ENCODE measurements at regions of chrX and their contacts with region 1.

Region 1: GRCh38 chrX:127276325-127276724 is 456.8 kb downstream of the PRR32 start:
- DNase-seq: no peak

Region 2: DNA sequence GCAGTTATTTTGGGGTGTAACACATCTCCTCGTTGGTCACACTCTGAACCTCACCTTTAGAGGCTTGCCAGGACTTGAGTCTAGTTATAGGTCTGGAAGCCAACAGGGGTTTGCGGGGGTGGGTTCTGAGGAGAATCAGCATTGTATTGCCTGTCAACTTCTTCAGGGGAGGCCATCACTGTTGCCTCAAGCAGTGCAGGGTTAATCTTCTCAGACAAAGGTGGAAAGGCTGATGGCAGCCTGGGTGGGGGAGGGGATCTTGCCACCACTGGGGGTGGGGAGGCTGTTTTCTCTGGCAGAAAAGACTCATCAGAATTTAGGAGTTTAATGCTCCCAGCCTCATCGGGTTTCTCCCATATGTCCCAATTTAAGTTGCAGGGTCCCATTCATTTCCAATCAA is 69.0 kb before region 1 on chrX:
- intact Hi-C with region 1: no loop called
- DNase-seq: no peak

Region 3: DNA sequence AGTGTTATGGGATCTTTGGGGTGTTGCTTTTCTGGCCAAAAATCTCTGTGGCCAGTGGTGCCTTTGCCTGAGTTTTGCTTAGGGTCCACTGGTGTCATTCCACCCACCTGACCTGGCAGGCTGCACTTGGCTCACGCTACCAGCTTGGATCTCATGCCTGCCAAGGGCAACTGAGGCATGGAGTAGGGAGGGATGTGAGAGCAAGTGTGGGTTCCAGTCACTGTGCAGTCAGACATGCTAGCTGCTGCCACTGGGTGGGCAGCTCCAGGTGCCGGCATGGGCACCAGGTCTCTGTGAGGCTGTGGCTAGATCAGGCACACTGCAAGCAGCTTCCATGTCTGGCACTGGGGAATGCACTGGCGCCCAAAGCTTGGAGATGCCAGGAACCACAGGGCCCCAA is 32.7 kb before region 1 on chrX:
- intact Hi-C with region 1: no loop called
- DNase-seq: no peak

Region 4: GRCh38 chrX:127256285-127256684 is 20.0 kb before region 1 on chrX:
- intact Hi-C with region 1: loop called (anchors 2 kb)
- DNase-seq: no peak

Measured in cardiac septum (tissue), 1 donor.